Dendritic cell treated with granulocyte-macrophage colony-stimulating factor and Interleukin-4, amounts not matched to agents 40 ng/mL and 50 ng/mL, for 4 days (primary cell): ENCODE measurements at regions of chr10 and their contacts with region 1.

Region 1: GRCh38 chr10:7872041-7872442 is 53.7 kb downstream of the TAF3 start:
- H3K4me3 Mint-ChIP-seq: peak overlapping the region; percentile 76
- H3K27ac Mint-ChIP-seq: no peak overlapping the region
- H3K4me1 Mint-ChIP-seq: peaks cover 5% of the 10 kb centered on the region
- H3K27me3 Mint-ChIP-seq: no peaks in the 10 kb centered on the region

Region 2: GRCh38 chr10:7666253-7667081 is 205.6 kb before region 1 on chr10 and contains the start of gene ITIH5:
- intact Hi-C with region 1: no loop called
- H3K4me3 Mint-ChIP-seq: peak within 1 kb of the TSS; percentile 31
- H3K27ac Mint-ChIP-seq: no peak within 1 kb of the TSS
- H3K4me1 Mint-ChIP-seq: peaks cover 12% of the 10 kb centered on the region
- H3K27me3 Mint-ChIP-seq: peaks cover 70% of the 10 kb centered on the region

Region 3: GRCh38 chr10:9209105-9209798 is 1337.2 kb after region 1 on chr10:
- intact Hi-C with region 1: loop called (anchors 1 kb)
- H3K4me3 Mint-ChIP-seq: no peak overlapping the region
- H3K27ac Mint-ChIP-seq: no peak overlapping the region
- H3K4me1 Mint-ChIP-seq: no peaks in the 10 kb centered on the region
- H3K27me3 Mint-ChIP-seq: no peaks in the 10 kb centered on the region